ENCODE measurements at regions of chr7 and their contacts with region 1.

Region 1: GRCh38 chr7:155815332-155816191 is 3.3 kb upstream of the SHH start:
- DNase-seq: peak; percentile 93
- H3K4me3 Mint-ChIP-seq: peak overlapping the region; percentile 36
- H3K27ac Mint-ChIP-seq: peak overlapping the region; percentile 63
- H3K4me1 Mint-ChIP-seq: peaks cover 45% of the 10 kb centered on the region
- H3K27me3 Mint-ChIP-seq: peaks cover 40% of the 10 kb centered on the region
- CTCF ChIP-seq: peak; percentile 83

Region 2: DNA sequence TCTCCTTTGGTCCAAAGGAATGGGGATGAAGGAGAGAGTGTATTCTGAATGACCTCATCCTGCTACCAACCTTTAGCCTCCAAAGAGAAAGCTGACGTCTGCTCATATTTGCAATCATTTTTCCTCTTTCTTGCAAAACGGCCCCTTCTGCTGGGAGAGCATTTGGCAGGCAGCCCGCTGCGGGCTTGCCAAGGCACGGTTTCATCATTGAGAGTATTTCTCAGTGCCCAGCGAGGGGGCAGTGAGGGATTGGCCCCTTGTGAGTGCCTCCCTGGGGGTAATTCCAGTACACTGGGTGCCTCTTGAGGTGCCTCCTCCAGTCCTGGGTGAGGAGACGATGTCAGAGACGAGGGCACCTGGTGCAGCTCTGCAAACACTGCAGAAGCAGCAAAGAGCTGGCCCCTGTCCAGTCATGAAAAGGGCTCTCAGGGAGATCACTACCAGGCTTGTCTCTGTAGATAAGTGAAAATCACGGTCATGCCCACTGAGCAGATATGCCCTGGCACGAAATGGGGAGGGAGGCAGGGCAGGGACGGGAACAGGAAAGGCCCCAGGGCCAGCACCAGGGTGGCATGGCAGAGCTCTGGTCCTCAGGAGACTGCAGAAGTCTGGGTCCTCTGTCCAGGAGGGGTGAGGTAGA is 45.4 kb after region 1 on chr7:
- CTCF ChIA-PET with region 1: no interaction called
- intact Hi-C with region 1: loop called (anchors 5 kb)
- DNase-seq: peak; percentile 88
- H3K4me3 Mint-ChIP-seq: peak overlapping the region; percentile 6
- H3K27ac Mint-ChIP-seq: peak overlapping the region; percentile 34
- H3K4me1 Mint-ChIP-seq: peaks cover 21% of the 10 kb centered on the region
- H3K27me3 Mint-ChIP-seq: peaks cover 19% of the 10 kb centered on the region
- CTCF ChIP-seq: no peak

Region 3: GRCh38 chr7:155921804-155922721 is 106.5 kb after region 1 on chr7:
- CTCF ChIA-PET with region 1: no interaction called
- intact Hi-C with region 1: loop called (anchors 2 kb)
- DNase-seq: peak; percentile 92
- H3K4me3 Mint-ChIP-seq: peak overlapping the region; percentile 65
- H3K27ac Mint-ChIP-seq: peak overlapping the region; percentile 95
- H3K4me1 Mint-ChIP-seq: peaks cover 73% of the 10 kb centered on the region
- H3K27me3 Mint-ChIP-seq: no peaks in the 10 kb centered on the region
- CTCF ChIP-seq: no peak

Region 4: DNA sequence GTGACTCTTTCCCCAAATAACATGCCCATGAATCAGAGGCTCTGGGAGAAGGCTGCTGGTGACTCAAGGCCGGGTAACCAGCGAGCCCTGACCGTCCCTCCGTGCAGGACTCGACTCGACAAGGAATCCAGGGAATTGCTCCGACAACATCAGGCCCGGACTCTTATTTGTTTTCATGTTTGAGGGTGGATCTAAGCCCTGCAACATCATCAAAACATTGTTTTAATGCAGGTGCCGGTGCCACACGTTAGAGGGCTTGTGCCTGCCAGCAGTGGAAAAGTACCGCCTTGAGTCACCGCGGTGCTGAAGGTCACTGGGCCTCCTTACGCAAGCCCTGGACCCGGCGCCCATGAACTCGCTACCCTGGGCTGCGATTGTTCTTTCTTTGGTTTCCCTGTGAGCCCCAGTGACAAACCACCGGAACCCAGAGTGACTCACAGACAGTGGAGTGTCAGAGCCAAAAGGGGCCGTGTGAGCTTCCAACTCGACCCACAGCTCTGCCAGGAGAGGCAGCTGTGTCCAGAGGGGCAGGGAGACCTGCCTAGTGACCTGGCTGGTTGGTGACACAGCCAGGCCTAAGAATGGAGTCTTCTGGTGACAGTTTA is 136.1 kb after region 1 on chr7:
- CTCF ChIA-PET with region 1: no interaction called
- intact Hi-C with region 1: loop called (anchors 5 kb)
- DNase-seq: peak; percentile 91
- H3K4me3 Mint-ChIP-seq: peak overlapping the region; percentile 54
- H3K27ac Mint-ChIP-seq: peak overlapping the region; percentile 97
- H3K4me1 Mint-ChIP-seq: peaks cover 47% of the 10 kb centered on the region
- H3K27me3 Mint-ChIP-seq: no peaks in the 10 kb centered on the region
- CTCF ChIP-seq: no peak

Region 5: DNA sequence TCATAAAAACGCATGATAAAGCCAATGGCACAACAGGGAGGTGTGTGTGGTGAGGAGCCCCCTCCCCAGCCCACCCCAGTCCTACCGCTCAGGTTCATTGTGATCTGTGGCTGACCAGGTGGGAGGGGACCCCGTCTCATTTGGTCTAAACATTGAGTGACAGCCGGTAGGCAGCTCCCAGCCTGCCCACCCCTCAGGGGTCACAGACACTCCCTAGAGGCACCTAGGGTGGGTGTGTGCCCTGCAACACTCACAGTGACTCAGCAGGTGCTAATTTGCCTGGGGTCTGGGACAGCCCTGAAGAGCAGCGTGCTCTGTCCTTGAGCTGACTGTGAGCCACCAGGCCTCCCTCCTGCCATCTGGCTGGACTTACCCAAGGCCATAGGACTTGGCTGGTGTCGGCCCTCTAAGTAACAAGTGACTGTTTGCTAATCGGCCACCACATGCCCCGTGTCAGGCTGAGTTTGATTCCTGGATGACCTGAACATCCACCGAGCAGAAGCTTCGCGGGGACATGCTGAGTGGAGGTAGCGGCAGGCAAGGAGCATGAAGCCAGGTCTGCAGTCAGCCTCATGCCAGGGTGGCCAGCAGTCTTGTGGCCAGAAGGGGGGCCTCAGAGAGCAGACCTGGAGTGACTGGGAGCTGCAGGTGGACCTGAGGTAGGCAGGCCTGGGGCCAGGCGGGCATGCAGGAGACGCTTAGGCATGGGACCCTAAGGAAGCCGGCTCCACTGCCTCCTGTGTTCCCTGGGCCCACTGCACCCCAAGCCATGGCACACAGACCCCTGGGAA is 279.0 kb after region 1 on chr7:
- CTCF ChIA-PET with region 1: no interaction called
- intact Hi-C with region 1: no loop called
- DNase-seq: no peak
- H3K4me3 Mint-ChIP-seq: no peak overlapping the region
- H3K27ac Mint-ChIP-seq: no peak overlapping the region
- H3K4me1 Mint-ChIP-seq: no peaks in the 10 kb centered on the region
- H3K27me3 Mint-ChIP-seq: no peaks in the 10 kb centered on the region
- CTCF ChIP-seq: no peak

Region 6: GRCh38 chr7:156156734-156157610 is 341.4 kb after region 1 on chr7:
- CTCF ChIA-PET with region 1: no interaction called
- intact Hi-C with region 1: loop called (anchors 2 kb)
- DNase-seq: peak; percentile 64
- H3K4me3 Mint-ChIP-seq: no peak overlapping the region
- H3K27ac Mint-ChIP-seq: no peak overlapping the region
- H3K4me1 Mint-ChIP-seq: peaks cover 25% of the 10 kb centered on the region
- H3K27me3 Mint-ChIP-seq: no peaks in the 10 kb centered on the region
- CTCF ChIP-seq: peak; percentile 42

Region 7: DNA sequence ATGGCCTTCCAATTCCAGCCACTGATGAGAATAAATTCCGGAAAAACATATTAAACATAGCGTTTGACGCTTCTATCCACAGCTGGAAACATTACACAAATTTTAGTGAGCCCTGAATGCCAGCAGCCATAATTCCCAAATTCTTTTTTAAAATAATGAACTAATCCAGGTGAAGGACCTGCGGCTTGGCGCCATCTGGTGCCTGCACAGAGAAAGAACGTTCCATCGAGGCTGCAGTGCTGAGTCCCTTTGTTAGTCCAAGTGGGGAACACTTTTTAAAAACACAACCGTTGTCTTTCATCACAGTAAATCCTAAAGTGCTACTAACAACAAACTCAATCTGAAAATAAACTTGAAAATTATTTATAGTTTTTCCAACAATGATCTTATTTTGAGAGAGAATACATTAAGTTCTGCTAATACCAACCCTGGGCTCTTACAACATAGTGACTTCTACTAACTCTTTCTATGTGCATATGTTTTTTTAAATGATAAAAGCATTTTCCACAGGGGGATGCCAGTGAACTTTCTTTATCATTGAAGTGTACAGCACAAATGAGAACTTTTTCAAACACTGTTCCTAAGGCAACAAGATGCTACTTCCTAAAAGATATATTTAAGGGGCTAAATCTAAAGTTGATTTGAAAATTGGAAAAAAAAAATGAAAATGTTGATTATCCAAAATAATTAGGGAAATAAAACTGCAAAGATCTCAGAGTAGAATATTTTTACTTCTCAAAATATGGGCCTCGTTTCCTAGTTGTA is 658.1 kb after region 1 on chr7:
- CTCF ChIA-PET with region 1: no interaction called
- intact Hi-C with region 1: loop called (anchors 1 kb)
- DNase-seq: peak; percentile 54
- H3K4me3 Mint-ChIP-seq: no peak overlapping the region
- H3K27ac Mint-ChIP-seq: no peak overlapping the region
- H3K4me1 Mint-ChIP-seq: no peaks in the 10 kb centered on the region
- H3K27me3 Mint-ChIP-seq: peaks cover 22% of the 10 kb centered on the region
- CTCF ChIP-seq: peak; percentile 71

Region 8: DNA sequence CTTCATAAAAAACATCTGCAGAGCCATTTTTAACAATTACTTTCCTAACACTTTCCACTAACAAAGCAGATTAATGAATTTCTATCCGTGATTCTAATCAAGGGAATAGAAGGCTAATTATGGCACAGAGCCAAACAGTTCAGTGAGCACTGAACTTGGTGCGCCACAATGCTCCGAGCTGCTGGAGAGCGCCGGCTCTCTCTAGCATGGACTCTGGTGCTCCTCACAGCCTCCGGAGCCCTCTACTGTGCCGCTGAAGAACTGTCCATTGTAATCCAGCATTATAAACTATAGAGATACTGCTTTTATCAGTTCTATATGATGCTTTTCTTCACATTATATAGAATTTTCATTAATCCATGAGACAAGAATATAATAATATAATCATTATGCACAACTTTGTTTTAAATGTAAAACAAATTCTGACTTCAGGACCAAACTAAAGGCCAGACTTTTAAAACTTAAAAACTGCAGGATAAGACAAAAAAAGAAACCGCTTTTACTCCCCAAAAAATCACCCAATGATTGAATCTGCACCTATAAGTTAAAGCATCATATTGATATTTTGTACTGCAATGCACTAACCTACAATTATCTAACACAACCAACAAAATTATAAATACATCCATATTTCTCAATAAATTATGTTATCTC is 948.6 kb after region 1 on chr7:
- CTCF ChIA-PET with region 1: interaction called, 3 read pairs
- intact Hi-C with region 1: loop called (anchors 10 kb)
- DNase-seq: peak; percentile 48
- H3K4me3 Mint-ChIP-seq: no peak overlapping the region
- H3K27ac Mint-ChIP-seq: no peak overlapping the region
- H3K4me1 Mint-ChIP-seq: peaks cover 2% of the 10 kb centered on the region
- H3K27me3 Mint-ChIP-seq: no peaks in the 10 kb centered on the region
- CTCF ChIP-seq: no peak